Activated naive CD4-positive, alpha-beta T cell treated with anti-CD3 and anti-CD28 coated beads for 36 hours (primary cell): ENCODE measurements at regions of chr2 and their contacts with region 1.

Region 1: DNA sequence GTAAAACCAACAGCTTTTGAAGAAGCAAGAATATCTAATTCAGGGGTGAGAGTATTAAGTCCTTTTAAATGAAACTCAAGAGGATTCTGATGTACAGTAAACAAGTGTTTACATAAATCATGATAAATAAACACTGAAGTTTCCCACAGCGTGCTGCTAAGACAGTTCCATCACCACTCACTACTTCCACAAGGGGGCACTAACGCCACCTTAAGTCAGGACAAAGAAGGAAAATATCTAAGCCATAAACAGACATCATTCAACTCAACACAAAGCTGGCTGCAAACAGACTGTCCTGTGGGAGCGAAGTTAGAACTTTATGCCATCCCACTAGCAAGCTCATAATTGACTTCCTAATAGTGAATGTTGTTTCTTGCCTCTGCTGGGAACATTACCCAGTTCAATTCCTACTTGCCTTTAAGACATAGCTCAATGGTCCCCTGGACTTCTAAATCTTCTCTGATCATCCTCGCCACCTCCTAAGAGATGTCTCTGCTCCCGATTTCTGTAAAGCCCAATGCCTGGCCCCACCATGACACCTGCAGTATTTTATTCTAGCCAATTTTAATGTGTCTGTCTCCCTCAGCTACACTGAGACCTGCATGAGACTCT is 36.5 kb downstream of the MRPL44 start:
- DNase-seq: peak; percentile 82
- H3K4me3 Mint-ChIP-seq: no peak overlapping the region
- H3K27ac Mint-ChIP-seq: peak overlapping the region; percentile 3
- H3K4me1 Mint-ChIP-seq: peaks cover 31% of the 10 kb centered on the region
- H3K27me3 Mint-ChIP-seq: no peaks in the 10 kb centered on the region

Region 2: DNA sequence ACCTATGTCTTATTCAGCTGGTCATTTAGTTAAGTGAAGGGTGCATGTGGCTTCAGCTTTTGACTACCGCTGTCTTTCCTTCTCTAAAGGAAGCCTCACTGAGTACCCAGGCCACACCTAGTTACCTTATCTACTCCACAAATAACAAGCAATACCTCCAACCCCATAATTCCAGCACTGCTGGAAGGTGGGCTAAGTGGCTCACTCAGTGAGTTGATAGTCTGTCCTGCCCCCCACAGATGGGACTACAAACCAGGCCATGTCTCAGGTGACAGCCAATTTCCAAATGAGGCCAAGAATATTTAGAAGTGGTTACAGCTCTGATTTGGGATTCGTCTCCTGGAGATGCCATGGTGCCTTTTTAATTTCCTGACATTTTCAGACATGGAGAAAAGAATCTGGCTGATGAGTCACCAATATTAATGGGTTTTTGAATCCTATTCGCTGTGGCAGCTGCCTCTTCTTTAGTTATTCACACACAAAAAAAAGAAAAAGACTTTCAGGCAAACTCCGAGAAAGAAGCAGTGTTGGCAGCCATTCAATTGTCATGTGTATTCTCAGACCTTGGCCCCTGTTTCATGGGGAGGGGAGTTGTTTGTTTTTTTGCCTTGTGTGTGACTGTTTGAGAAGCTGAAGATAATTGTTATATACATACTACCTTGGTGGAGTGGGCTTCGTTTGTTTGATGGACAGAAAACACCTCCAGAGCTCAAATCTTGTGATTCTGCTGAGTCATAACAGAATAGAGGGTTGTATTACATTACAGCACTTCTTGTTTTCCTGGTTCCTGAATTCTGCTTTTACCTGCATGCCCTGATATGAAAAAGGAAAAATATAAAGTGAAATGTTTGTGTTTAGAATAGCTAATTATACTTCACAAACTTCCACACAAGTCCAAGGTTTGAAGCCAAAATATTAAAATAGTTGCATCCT is 455.8 kb before region 1 on chr2:
- CTCF ChIA-PET with region 1: no interaction called
- intact Hi-C with region 1: no loop called
- DNase-seq: no peak
- H3K4me3 Mint-ChIP-seq: no peak overlapping the region
- H3K27ac Mint-ChIP-seq: no peak overlapping the region
- H3K4me1 Mint-ChIP-seq: no peaks in the 10 kb centered on the region
- H3K27me3 Mint-ChIP-seq: no peaks in the 10 kb centered on the region

Region 3: GRCh38 chr2:223950448-223951347 is 43.0 kb before region 1 on chr2:
- CTCF ChIA-PET with region 1: no interaction called
- intact Hi-C with region 1: no loop called
- DNase-seq: no peak
- H3K4me3 Mint-ChIP-seq: no peak overlapping the region
- H3K27ac Mint-ChIP-seq: peak overlapping the region; percentile 85
- H3K4me1 Mint-ChIP-seq: peaks cover 75% of the 10 kb centered on the region
- H3K27me3 Mint-ChIP-seq: no peaks in the 10 kb centered on the region

Region 4: DNA sequence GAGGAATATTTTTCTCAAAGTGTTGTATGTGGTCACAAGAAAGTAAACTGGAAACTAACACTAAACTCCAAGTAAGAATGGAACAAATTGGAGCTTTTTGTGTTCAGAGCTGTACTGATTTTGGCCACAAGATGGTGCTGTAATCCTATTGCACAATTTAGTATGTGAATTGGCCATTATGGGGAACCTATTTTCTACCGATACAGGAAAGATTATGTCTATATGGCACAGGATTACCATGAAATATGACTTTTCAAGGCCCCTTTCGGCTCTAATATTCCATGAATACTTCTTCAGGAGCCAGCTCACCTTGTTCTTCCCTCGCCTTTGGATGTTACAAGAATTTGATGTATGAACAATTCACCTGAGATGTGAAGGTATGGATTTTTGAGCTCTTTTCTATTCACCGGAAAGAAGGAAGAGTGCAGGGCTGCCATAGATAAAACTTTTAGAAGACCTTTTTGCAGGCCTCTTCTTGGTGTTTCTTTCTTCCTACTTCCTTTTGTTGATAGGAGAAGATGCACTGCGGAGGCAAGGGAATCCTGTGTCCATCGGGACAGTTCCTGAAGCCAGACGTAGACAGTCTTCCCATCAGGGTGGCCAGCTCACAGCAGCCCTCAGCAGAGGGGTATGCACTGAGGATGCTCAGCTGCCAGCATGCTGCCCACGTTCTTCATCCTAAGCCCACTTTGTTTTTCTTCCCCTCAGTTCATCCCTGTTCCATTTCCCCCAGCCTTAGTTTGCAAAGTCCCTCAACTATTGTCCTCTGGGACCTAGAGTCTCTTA is 23.2 kb before region 1 on chr2:
- CTCF ChIA-PET with region 1: interaction called, 59 read pairs
- intact Hi-C with region 1: loop called (anchors 1 kb)
- DNase-seq: peak; percentile 77
- H3K4me3 Mint-ChIP-seq: no peak overlapping the region
- H3K27ac Mint-ChIP-seq: no peak overlapping the region
- H3K4me1 Mint-ChIP-seq: peaks cover 11% of the 10 kb centered on the region
- H3K27me3 Mint-ChIP-seq: no peaks in the 10 kb centered on the region

Region 5: DNA sequence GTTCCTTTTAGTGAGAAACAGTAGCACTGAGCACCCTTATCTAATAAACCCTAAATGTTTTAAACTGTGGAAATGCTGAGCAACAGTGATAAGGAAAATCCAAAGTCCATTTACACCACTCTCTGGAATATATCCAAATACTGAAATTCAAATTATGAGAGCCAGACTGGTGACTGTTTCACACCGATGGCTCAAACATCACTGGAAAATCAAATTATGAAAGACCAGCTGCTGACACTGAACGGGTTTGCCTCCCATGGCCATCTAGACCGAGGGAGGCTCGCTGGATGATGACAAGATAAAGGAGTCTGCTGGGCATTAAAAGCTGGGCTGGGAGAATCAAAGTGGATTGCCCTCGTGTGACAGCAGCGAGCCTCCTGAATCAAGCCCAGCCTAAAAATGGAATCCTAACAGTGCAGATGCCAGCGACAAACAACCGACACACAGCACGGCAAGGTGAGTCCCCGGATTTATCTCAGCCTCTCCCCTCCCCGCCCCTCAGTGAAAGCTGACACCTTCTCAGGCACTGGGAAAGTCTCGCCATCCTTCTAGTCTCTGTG is 15.1 kb after region 1 on chr2:
- CTCF ChIA-PET with region 1: interaction called, 20 read pairs
- intact Hi-C with region 1: no loop called
- DNase-seq: no peak
- H3K4me3 Mint-ChIP-seq: no peak overlapping the region
- H3K27ac Mint-ChIP-seq: no peak overlapping the region
- H3K4me1 Mint-ChIP-seq: peaks cover 8% of the 10 kb centered on the region
- H3K27me3 Mint-ChIP-seq: no peaks in the 10 kb centered on the region

Region 6: GRCh38 chr2:224025874-224026273 is 32.1 kb after region 1 on chr2:
- CTCF ChIA-PET with region 1: interaction called, 9 read pairs
- intact Hi-C with region 1: loop called (anchors 1 kb)
- DNase-seq: peak; percentile 84
- H3K4me3 Mint-ChIP-seq: peak overlapping the region; percentile 64
- H3K27ac Mint-ChIP-seq: peak overlapping the region; percentile 95
- H3K4me1 Mint-ChIP-seq: peaks cover 84% of the 10 kb centered on the region
- H3K27me3 Mint-ChIP-seq: no peaks in the 10 kb centered on the region

Region 7: DNA sequence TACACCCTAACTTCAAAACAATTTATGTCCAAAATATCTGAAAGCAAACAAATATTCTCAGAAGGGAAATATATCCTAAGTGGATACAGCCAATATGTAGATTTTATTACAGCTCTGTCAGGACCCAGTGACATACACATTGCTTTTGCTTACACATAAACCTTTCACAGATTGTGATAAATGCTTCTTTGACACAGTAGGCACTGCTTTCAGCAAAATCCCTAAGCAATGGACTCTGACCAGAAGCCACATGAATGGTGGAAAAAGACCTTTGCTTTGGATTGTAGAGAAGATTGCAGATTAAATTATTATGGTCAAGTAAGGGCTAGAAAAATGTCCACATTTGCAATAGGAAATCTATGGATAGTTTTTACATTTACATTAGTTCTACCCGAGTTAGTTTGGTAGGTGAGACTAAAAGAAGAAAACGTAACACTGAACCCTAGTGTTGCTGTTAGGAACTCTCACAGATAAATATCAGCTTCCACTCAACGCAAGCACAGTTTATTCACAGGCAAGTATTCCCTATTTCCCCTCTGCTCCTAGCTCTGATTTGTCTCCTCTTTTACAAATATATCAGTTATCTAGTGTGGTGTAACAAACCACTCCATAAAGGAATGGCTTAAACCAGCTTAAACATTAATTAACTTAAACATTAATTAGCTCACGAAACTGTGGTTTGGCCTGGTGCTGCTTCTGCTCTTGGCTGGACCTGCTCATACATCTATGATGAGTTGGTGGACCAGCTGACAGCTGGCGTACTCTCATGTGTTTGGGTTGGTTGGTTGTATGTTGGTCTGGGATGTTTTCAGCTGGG is 69.0 kb after region 1 on chr2:
- CTCF ChIA-PET with region 1: interaction called, 81 read pairs
- intact Hi-C with region 1: loop called (anchors 1 kb)
- DNase-seq: no peak
- H3K4me3 Mint-ChIP-seq: no peak overlapping the region
- H3K27ac Mint-ChIP-seq: no peak overlapping the region
- H3K4me1 Mint-ChIP-seq: no peaks in the 10 kb centered on the region
- H3K27me3 Mint-ChIP-seq: no peaks in the 10 kb centered on the region

Region 8: DNA sequence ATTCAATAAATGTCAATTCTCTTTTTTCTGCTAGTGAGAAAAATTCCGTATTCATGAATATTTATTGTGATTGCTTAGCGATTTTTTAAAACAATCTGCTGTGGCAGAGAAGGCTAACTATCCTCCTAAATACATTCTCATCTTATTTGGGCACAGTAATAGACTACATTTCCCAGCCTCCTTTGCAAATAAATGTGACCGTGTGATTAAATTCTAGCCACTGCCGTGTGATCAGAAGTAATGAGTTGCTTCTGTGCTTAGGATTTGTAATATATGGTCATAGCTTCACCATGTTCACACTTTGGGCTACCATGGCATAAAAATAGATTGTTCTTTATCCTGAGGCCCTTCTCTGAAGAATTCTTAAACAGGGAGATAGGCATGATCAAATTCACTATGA is 228.6 kb after region 1 on chr2:
- CTCF ChIA-PET with region 1: interaction called, 11 read pairs
- intact Hi-C with region 1: no loop called
- DNase-seq: no peak
- H3K4me3 Mint-ChIP-seq: no peak overlapping the region
- H3K27ac Mint-ChIP-seq: no peak overlapping the region
- H3K4me1 Mint-ChIP-seq: peaks cover 6% of the 10 kb centered on the region
- H3K27me3 Mint-ChIP-seq: peaks cover 33% of the 10 kb centered on the region

Region 9: GRCh38 chr2:224284134-224284946 is 290.6 kb after region 1 on chr2:
- CTCF ChIA-PET with region 1: interaction called, 111 read pairs
- intact Hi-C with region 1: loop called (anchors 1 kb)
- DNase-seq: peak; percentile 50
- H3K4me3 Mint-ChIP-seq: no peak overlapping the region
- H3K27ac Mint-ChIP-seq: no peak overlapping the region
- H3K4me1 Mint-ChIP-seq: no peaks in the 10 kb centered on the region
- H3K27me3 Mint-ChIP-seq: peaks cover 25% of the 10 kb centered on the region